ENCODE measurements at regions of chr2 and their contacts with region 1.

Region 1: GRCh38 chr2:166560022-166560421 is 66.0 kb upstream of the SCN7A start:
- H3K4me3 ChIP-seq: no peak overlapping the region
- H3K27ac ChIP-seq: no peak overlapping the region
- H3K4me1 ChIP-seq: no peaks in the 10 kb centered on the region
- CTCF ChIP-seq: no peak

Region 2: GRCh38 chr2:166373951-166374350 is 186.1 kb before region 1 on chr2:
- CTCF ChIA-PET with region 1: no interaction called
- POLR2A ChIA-PET with region 1: no interaction called
- H3K4me3 ChIP-seq: no peak overlapping the region
- H3K27ac ChIP-seq: no peak overlapping the region
- H3K4me1 ChIP-seq: peaks cover 20% of the 10 kb centered on the region
- CTCF ChIP-seq: no peak

Region 3: GRCh38 chr2:166675553-166675952 is 115.5 kb after region 1 on chr2:
- CTCF ChIA-PET with region 1: interaction called, 11 read pairs
- POLR2A ChIA-PET with region 1: no interaction called
- H3K4me3 ChIP-seq: no peak overlapping the region
- H3K27ac ChIP-seq: no peak overlapping the region
- H3K4me1 ChIP-seq: no peaks in the 10 kb centered on the region
- CTCF ChIP-seq: no peak

Region 4: GRCh38 chr2:166700079-166700478 is 140.1 kb after region 1 on chr2:
- CTCF ChIA-PET with region 1: no interaction called
- POLR2A ChIA-PET with region 1: no interaction called
- H3K4me3 ChIP-seq: no peak overlapping the region
- H3K27ac ChIP-seq: no peak overlapping the region
- H3K4me1 ChIP-seq: no peaks in the 10 kb centered on the region
- CTCF ChIP-seq: no peak

Measured in HEK293 (cell line).